Heart left ventricle (tissue), 16 donors: ENCODE measurements at regions of chr7 and their contacts with region 1.

Region 1: DNA sequence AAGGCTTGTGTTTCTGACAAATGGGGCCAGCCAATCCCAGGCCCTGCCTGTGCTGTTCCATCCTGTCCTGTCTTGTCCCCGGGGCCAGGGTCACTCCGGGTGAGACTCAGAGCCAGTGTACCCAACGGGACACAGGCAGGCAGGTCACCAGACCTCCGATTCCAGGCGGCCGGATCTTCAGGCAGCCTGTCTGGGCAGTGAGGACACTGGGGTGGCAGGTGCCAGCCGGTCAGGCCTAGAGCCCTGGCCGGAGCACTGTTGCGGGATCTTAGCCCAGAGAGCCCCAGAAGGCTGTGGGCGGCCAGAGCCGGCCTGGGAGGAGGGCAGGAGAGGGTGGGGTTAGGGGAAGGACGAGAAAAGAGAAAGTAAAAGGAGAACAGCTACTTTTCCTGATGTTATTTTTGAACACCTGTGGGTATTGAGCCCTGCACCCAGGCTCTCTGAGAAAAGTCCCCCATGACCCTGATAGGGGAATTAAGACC is 134.3 kb upstream of the TNRC18 start:
- DNase-seq: peak; percentile 68 to 90 (median 87)
- ATAC-seq: peak; percentile 26 to 56 (median 42)
- H3K4me3 ChIP-seq: peak overlapping the region in 9 of 12 donors; percentile 6 to 80 (median 28)
- H3K27ac ChIP-seq: peak overlapping the region; percentile 96 to 100 (median 99)
- H3K4me1 ChIP-seq: peaks cover 0 to 61% (median 54%) of the 10 kb centered on the region in 12 donors
- H3K27me3 ChIP-seq: no peaks in the 10 kb centered on the region
- CTCF ChIP-seq: no peak
- POLR2A ChIP-seq: peak in 1 of 2 donors; percentile 39

Region 2: GRCh38 chr7:5132539-5132938 is 425.4 kb before region 1 on chr7:
- intact Hi-C with region 1: no loop called
- DNase-seq: no peak
- ATAC-seq: no peak
- H3K4me3 ChIP-seq: no peak overlapping the region
- H3K27ac ChIP-seq: no peak overlapping the region
- H3K4me1 ChIP-seq: no peaks in the 10 kb centered on the region
- H3K27me3 ChIP-seq: peaks cover 0 to 4% (median 0%) of the 10 kb centered on the region in 9 donors
- CTCF ChIP-seq: no peak
- POLR2A ChIP-seq: no peak

Region 3: DNA sequence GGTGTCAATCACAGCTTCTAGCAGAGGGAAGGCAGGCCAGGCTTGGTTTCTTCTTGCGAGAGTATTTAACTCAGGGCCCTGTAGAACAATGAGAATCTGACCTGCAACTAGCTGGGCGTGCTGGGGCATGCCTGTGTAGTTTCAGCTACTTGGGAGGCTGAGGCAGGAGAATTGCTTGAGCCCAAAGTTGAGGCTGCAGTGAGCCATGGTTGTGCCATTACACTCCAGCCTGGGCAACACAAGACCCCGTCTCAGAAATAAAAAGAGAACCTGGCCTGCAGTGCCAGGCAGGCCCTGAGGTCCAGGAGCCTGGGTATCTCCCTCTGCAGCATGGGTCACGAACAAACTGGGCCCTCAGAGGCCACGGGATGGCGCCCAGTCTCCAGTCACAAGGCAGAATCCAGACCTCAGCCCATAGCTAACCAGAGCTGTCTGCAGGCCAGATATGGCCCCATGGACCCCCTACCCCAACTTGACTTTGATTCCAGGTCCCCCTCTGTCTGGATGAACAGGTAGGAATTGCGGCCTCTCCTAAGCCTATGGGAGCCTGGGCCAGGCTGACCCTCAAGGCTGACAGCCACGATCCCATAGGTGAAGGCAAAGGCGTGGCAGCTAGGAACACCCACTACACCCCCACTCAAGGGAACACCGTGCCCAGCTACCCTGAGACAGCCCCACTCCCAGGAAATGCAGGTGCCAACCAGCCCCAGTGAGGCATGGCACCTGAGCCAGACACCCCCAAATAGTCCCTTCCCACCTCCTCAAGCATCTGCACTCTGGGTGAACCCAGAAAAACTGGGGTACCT is 31.7 kb before region 1 on chr7:
- intact Hi-C with region 1: loop called in 1 of 10 experiments (anchors 2 kb)
- DNase-seq: peak; percentile 44 to 69 (median 53)
- ATAC-seq: peak; percentile 2 to 31 (median 8)
- H3K4me3 ChIP-seq: peak overlapping the region in 10 of 12 donors; percentile 86 to 100 (median 98)
- H3K27ac ChIP-seq: peak overlapping the region in 11 of 12 donors; percentile 17 to 100 (median 100)
- H3K4me1 ChIP-seq: peaks cover 0 to 35% (median 16%) of the 10 kb centered on the region in 12 donors
- H3K27me3 ChIP-seq: no peaks in the 10 kb centered on the region
- CTCF ChIP-seq: peak in 2 of 12 donors; percentile 7 to 11
- POLR2A ChIP-seq: peak in 1 of 2 donors; percentile 7